ENCODE measurements at regions of chr17 and their contacts with region 1.

Region 1: GRCh38 chr17:8138672-8139371 is 13.4 kb downstream of the PER1 start:
- DNase-seq: peak; percentile 98
- ATAC-seq: peak; percentile 90
- H3K4me3 Mint-ChIP-seq: no peak overlapping the region
- H3K27ac Mint-ChIP-seq: no peak overlapping the region
- H3K4me1 Mint-ChIP-seq: no peaks in the 10 kb centered on the region
- H3K27me3 Mint-ChIP-seq: peaks cover 3% of the 10 kb centered on the region
- CTCF ChIP-seq: peak; percentile 87

Region 2: DNA sequence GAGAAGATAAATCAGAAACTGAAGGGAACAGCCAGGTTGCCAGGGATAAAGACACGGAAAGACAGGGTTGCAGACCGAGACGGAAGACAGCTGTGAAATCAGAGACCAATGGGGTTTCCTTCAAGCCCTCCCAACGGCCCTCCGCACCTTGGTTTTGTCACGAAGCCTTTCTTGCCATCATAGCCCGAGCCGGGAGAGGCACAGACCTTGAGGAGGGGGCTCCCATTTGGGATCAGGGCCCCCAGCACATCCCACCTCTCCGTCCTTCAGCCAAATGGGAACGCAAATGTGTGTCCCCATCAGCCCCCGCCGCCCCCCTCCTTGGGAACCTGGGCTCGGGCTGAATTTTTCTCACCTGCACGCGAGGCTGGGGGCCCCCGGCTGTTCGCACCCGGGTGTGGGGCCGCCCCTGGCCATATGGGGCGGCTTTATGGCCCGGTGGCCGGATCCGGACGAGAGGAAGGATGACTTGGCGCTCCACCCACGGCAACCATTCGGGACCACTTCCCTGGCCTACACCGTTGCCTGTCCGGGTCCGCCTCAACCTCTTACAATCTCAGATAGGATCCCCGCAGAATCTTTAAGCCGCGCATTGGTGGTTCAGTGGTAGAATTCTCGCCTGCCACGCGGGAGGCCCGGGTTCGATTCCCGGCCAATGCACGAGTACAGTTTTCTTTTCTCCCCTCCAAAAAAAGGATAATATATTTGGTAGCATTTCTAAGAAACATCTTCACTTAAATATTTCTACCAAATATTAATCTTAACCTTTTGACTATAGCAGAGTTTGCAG is 13.5 kb before region 1 on chr17:
- CTCF ChIA-PET with region 1: interaction called, 63 read pairs
- POLR2A ChIA-PET with region 1: interaction called, 21 read pairs
- intact Hi-C with region 1: loop called (anchors 2 kb)
- DNase-seq: peak; percentile 93
- ATAC-seq: peak; percentile 28
- H3K4me3 Mint-ChIP-seq: peak overlapping the region; percentile 97
- H3K27ac Mint-ChIP-seq: peak overlapping the region; percentile 90
- H3K4me1 Mint-ChIP-seq: peaks cover 45% of the 10 kb centered on the region
- H3K27me3 Mint-ChIP-seq: peaks cover 32% of the 10 kb centered on the region
- CTCF ChIP-seq: no peak

Region 3: GRCh38 chr17:8151123-8151640 is 12.4 kb after region 1 on chr17:
- CTCF ChIA-PET with region 1: interaction called, 14 read pairs
- POLR2A ChIA-PET with region 1: interaction called, 228 read pairs
- intact Hi-C with region 1: loop called (anchors 1 kb)
- DNase-seq: peak; percentile 91
- ATAC-seq: peak; percentile 29
- H3K4me3 Mint-ChIP-seq: no peak overlapping the region
- H3K27ac Mint-ChIP-seq: peak overlapping the region; percentile 65
- H3K4me1 Mint-ChIP-seq: peaks cover 38% of the 10 kb centered on the region
- H3K27me3 Mint-ChIP-seq: no peaks in the 10 kb centered on the region
- CTCF ChIP-seq: no peak

Region 4: DNA sequence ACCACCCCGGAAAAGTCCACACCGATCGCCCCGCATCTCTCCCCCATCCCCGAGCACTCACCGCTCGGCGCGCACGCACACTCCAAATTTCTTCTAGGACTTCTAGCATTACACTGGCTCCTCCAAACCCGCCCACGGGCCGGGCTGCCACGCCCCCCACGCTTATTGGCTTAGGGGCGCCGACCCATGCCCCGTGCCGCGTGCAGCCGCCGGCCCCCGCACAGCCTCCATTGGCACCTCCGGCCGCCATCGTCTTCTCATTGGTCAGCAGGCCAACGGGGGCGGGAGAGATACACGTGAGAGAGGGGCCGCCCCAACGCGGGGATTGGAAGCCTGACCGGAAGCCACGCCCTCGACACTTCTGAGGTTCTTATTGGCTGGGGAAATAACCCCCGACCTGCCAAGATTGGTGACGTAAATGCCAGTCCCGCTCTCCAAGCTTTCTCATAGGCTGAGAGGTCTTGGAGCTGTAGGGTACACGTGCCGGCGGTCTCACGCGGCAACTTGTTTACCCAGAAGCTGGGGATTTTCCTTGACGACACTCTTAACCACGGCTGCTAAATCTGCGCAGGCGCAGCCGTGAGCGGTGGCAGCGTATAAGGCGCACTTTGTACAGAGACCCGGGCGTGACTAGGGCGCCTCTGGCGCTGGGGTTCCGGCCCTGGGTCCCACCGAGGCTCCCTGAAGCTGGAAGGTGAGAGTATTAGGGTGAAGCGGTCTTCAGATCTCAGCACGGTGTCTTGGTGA is 17.6 kb after region 1 on chr17:
- CTCF ChIA-PET with region 1: interaction called, 37 read pairs
- POLR2A ChIA-PET with region 1: interaction called, 228 read pairs
- intact Hi-C with region 1: loop called (anchors 1 kb)
- DNase-seq: peak; percentile 100
- ATAC-seq: peak; percentile 73
- H3K4me3 Mint-ChIP-seq: no peak overlapping the region
- H3K27ac Mint-ChIP-seq: no peak overlapping the region
- H3K4me1 Mint-ChIP-seq: peaks cover 59% of the 10 kb centered on the region
- H3K27me3 Mint-ChIP-seq: no peaks in the 10 kb centered on the region
- CTCF ChIP-seq: no peak

Region 5: GRCh38 chr17:8300627-8301242 is 161.9 kb after region 1 on chr17:
- CTCF ChIA-PET with region 1: interaction called, 7 read pairs
- POLR2A ChIA-PET with region 1: no interaction called
- intact Hi-C with region 1: loop called (anchors 2 kb)
- DNase-seq: peak; percentile 70
- ATAC-seq: peak; percentile 95
- H3K4me3 Mint-ChIP-seq: no peak overlapping the region
- H3K27ac Mint-ChIP-seq: peak overlapping the region; percentile 41
- H3K4me1 Mint-ChIP-seq: peaks cover 6% of the 10 kb centered on the region
- H3K27me3 Mint-ChIP-seq: no peaks in the 10 kb centered on the region
- CTCF ChIP-seq: peak; percentile 84